Activated B cell treated with CpG ODN at 0.5 μM for 24 hours (primary cell): ENCODE measurements at regions of chr12 and their contacts with region 1.

Region 1: DNA sequence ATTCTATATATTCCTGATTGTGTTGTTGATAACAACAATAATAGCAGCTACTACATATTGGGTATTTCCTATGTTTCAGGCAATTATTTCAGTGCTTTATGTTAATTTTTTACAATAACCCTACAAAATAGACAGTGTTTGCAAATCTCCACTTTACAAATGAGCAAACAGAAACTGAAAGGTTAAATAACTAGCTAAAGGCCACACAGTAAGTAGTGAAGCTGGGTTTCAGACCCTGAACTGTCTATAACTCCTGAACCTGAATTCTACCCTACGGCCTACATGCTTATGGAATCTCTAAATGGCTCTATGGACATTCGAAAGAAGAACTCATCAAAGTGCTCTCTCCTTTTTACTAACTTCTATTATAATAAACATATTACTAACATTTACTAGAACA is 19.7 kb upstream of the NUDT4 start:
- DNase-seq: no peak
- ATAC-seq: no peak
- H3K4me3 Mint-ChIP-seq: no peak overlapping the region
- H3K27ac Mint-ChIP-seq: no peak overlapping the region
- H3K4me1 Mint-ChIP-seq: no peaks in the 10 kb centered on the region
- H3K27me3 Mint-ChIP-seq: no peaks in the 10 kb centered on the region
- CTCF ChIP-seq: no peak

Region 2: DNA sequence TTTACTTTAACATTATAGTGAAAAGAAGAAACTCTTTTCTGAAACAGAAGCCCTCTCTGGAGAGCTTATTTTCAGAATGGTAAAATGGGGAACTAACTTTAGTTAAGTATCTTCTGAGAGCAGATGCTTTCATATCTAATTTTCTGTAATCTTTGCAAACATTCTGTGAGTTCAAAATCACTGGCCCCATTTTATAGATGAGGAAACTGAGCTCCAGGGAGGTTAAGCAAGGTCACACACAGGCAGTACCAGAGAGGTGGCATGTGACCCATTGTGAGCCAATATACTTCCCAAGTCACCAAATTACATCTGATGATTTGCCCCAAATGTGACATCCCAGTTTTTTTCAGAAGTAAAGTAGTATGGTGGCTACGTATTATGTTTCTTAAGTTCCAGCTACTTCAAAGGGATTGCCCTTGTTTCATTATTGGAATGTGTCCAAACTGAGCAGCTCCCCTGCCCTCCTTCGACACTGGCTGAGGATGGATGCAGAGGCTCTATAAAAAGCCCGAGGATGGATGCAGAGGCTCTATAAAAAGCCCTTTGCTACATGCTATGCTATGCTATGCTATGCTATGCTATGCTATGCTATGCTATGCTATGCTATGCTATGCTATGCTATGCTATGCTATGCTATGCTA is 16.5 kb before region 1 on chr12:
- CTCF ChIA-PET with region 1: no interaction called
- POLR2A ChIA-PET with region 1: interaction called, 11 read pairs
- intact Hi-C with region 1: no loop called
- DNase-seq: no peak
- ATAC-seq: no peak
- H3K4me3 Mint-ChIP-seq: no peak overlapping the region
- H3K27ac Mint-ChIP-seq: no peak overlapping the region
- H3K4me1 Mint-ChIP-seq: no peaks in the 10 kb centered on the region
- H3K27me3 Mint-ChIP-seq: peaks cover 3% of the 10 kb centered on the region
- CTCF ChIP-seq: no peak